H1 (cell line): ENCODE measurements at regions of chr20 and their contacts with region 1.

Region 1: GRCh38 chr20:43102394-43102793 is 87.3 kb downstream of the PTPRT start:
- DNase-seq: peak; percentile 13 to 71
- H3K4me3 ChIP-seq: no peak overlapping the region
- H3K27ac ChIP-seq: no peak overlapping the region
- H3K4me1 ChIP-seq: no peaks in the 10 kb centered on the region
- H3K27me3 ChIP-seq: no peaks in the 10 kb centered on the region
- CTCF ChIP-seq: peak; percentile 69 to 93 (median 84)
- EP300 ChIP-seq: no peak
- POLR2A ChIP-seq: no peak
- RAD21 ChIP-seq: peak; percentile 62 to 72

Region 2: DNA sequence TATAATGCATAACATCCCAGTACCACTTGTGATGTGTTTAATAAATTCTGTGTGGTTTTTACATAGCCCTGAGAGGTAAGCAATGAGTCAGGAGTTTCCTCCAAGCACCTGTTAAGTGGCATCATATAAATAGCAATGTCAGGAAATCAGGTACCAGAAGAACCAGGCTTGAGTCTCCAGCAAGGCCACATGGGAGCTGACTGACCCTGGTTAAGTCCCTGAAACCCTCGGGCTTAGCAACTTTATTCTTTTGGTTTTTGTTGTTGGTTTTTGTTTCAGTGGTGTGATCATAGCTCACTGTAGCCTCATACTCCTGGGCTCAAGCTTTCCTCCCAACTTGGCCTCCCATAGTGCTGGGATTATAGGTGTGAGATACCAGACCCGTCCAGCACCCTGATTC is 17.3 kb after region 1 on chr20:
- CTCF ChIA-PET with region 1: interaction called, 12 read pairs
- POLR2A ChIA-PET with region 1: no interaction called
- DNase-seq: no peak
- H3K4me3 ChIP-seq: no peak overlapping the region
- H3K27ac ChIP-seq: no peak overlapping the region
- H3K4me1 ChIP-seq: no peaks in the 10 kb centered on the region
- H3K27me3 ChIP-seq: no peaks in the 10 kb centered on the region
- CTCF ChIP-seq: no peak
- EP300 ChIP-seq: no peak
- POLR2A ChIP-seq: no peak
- RAD21 ChIP-seq: no peak